A549 (cell line): ENCODE measurements at regions of chr19 and their contacts with region 1.

Region 1: DNA sequence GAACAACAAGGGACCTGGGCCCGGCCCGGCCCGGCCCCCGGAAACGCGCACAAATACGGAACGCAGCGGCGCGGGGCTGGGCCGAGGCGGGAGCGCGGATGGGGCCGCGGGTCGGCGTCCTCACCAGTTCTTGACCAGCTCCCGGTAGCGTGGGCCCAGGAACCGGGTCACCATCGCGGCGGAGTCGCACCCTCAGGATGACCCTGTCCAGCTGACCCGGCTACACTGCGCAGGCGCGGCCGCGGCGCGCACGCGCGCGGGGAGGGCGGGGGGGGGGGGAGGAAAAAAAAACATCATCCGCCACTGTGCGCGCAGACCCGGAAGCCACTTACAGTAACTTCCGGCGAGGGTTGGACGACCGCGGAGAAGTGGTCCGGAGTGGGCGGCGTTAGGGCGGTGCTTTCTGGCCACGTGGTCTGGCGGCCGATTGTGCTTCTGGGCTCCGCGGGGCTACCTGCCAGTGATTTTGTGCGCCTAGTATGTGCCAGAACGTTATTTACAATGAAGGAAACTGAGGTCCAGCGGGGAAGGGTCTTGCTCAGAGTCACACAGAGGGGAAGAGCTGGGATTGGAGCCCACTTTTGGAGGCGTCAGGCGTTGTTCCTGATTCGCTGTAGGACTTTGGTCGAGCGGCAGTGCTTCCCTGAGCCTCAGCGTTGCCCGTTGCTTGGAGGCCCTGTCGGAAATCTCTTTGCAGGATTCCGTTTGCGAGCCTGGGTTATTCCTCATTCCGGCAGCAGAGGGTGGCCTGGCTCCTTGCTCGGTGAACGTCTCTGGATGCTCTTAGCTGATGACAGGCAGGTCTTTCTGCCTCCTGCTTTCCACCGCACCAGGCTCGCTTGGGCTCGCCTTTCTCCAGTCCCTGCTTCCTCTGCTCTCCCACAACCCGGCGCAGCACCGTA is at the start of gene UQCR11:
- DNase-seq: peak; percentile 88 to 94
- ATAC-seq: peak; percentile 93
- H3K4me3 ChIP-seq: peak within 1 kb of the TSS; percentile 96
- H3K27ac ChIP-seq: peak within 1 kb of the TSS; percentile 90 to 98
- H3K4me1 ChIP-seq: peaks cover 13% of the 10 kb centered on the region
- CTCF ChIP-seq: 0 out of 3 replicates have a peak, but pooled peaks have one; percentile 15
- EP300 ChIP-seq: no peak
- POLR2A ChIP-seq: peak; percentile 61
- RAD21 ChIP-seq: peak; percentile 44 to 48; a peak in 4 of 5 replicates
- polyA plus RNA-seq, gene UQCR11: 111 and 136 TPM in 2 replicates

Region 2: GRCh38 chr19:1592755-1593500 is 12.6 kb before region 1 on chr19 and contains the start of gene MBD3:
- CTCF ChIA-PET with region 1: interaction called, 6 read pairs
- POLR2A ChIA-PET with region 1: interaction called, 11 read pairs
- DNase-seq: peak; percentile 80 to 93
- ATAC-seq: peak; percentile 80 to 83
- H3K4me3 ChIP-seq: peak within 1 kb of the TSS; percentile 93
- H3K27ac ChIP-seq: peak within 1 kb of the TSS; percentile 97 to 99
- H3K4me1 ChIP-seq: peaks cover 18% of the 10 kb centered on the region
- CTCF ChIP-seq: no peak
- EP300 ChIP-seq: no peak
- POLR2A ChIP-seq: peak; percentile 67
- RAD21 ChIP-seq: no peak
- polyA plus RNA-seq, gene MBD3: 22.7 and 23.3 TPM in 2 replicates